GM13976 (cell line): ENCODE measurements at regions of chr5 and their contacts with region 1.

Region 1: GRCh38 chr5:90606539-90606938 is 47.9 kb downstream of the ADGRV1 start:
- DNase-seq: no peak
- CTCF ChIP-seq: peak; percentile 26

Region 2: GRCh38 chr5:90434116-90434714 is 172.3 kb before region 1 on chr5:
- in situ Hi-C with region 1: loop called (anchors 10 kb)
- DNase-seq: no peak
- CTCF ChIP-seq: peak; percentile 59

Region 3: GRCh38 chr5:91875196-91875779 is 1268.7 kb after region 1 on chr5:
- in situ Hi-C with region 1: no loop called
- DNase-seq: no peak
- CTCF ChIP-seq: no peak